Activated naive CD8-positive, alpha-beta T cell treated with anti-CD3 and anti-CD28 coated beads, Interleukin-2, amount 10 ng/mL, durations not matched to agents 7 days and 5 days (primary cell): ENCODE measurements at regions of chr6 and their contacts with region 1.

Region 1: GRCh38 chr6:32971581-32972352 is 3.4 kb downstream of the BRD2 start:
- DNase-seq: peak; percentile 99
- ATAC-seq: peak; percentile 49
- H3K4me3 Mint-ChIP-seq: peak overlapping the region; percentile 89
- H3K27ac Mint-ChIP-seq: peak overlapping the region; percentile 94
- H3K4me1 Mint-ChIP-seq: peaks cover 30% of the 10 kb centered on the region
- H3K27me3 Mint-ChIP-seq: no peaks in the 10 kb centered on the region

Region 2: GRCh38 chr6:32127717-32128592 is 843.8 kb before region 1 on chr6 and contains the start of gene ATF6B:
- POLR2A ChIA-PET with region 1: interaction called, 13 read pairs
- DNase-seq: peak; percentile 87
- ATAC-seq: peak; percentile 95
- H3K4me3 Mint-ChIP-seq: peak within 1 kb of the TSS; percentile 99
- H3K27ac Mint-ChIP-seq: peak within 1 kb of the TSS; percentile 99
- H3K4me1 Mint-ChIP-seq: peaks cover 38% of the 10 kb centered on the region
- H3K27me3 Mint-ChIP-seq: peaks cover 1% of the 10 kb centered on the region
- total RNA-seq, gene ATF6B: 136 to 147 TPM

Region 3: DNA sequence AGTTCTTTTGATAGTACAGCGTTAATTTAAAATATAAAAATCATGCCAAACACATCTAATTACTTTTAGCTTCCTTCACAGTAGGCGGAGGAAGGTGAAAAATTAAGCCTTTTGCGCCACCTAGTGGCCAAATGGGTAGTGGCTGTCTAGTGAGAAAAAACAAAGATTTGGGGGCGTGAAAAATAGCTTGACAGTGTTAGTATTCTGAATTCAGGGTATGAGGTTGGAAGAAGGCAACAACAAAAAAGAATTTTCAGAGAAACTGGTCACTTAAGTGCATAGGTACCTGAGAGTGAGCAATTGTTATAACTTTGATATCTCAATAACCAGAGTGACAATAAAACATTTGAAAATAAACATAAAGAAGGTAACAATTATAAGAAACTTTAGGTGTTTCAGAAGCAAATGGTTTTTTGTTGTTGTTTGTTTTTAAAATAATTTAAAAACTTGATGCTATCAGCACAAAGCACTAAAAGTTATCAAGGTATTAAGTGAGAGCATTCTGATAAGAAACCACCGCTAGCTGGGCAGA is 103.4 kb before region 1 on chr6:
- POLR2A ChIA-PET with region 1: interaction called, 21 read pairs
- DNase-seq: peak; percentile 81
- ATAC-seq: peak; percentile 57
- H3K4me3 Mint-ChIP-seq: no peak overlapping the region
- H3K27ac Mint-ChIP-seq: no peak overlapping the region
- H3K4me1 Mint-ChIP-seq: peaks cover 32% of the 10 kb centered on the region
- H3K27me3 Mint-ChIP-seq: peaks cover 4% of the 10 kb centered on the region

Region 4: DNA sequence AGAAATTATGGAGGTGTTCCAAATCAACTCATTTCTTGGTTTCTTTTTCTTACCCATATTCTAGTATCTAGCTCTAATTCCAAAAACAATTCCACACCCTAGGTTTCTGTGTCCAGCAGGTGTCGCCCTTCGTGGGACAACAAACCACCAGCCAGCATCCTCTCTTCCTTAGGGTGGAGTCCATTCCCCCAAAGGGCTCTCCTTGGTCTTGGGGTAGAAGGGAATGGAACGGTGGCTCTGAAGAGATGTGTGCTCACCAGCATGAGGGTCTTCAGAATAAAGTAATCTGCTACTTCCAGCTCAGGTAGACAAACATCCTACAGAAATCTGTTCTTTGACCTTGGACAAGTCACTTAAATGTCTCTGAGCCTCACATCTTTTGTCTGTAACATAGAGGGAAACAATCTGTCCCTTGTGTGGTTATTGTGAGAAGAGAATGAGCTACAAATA is 38.1 kb before region 1 on chr6:
- POLR2A ChIA-PET with region 1: interaction called, 247 read pairs
- DNase-seq: peak; percentile 72
- ATAC-seq: peak; percentile 54
- H3K4me3 Mint-ChIP-seq: peak overlapping the region; percentile 26
- H3K27ac Mint-ChIP-seq: peak overlapping the region; percentile 44
- H3K4me1 Mint-ChIP-seq: peaks cover 24% of the 10 kb centered on the region
- H3K27me3 Mint-ChIP-seq: peaks cover under 1% of the 10 kb centered on the region

Region 5: GRCh38 chr6:32952817-32953739 is 18.7 kb before region 1 on chr6 and contains the start of gene HLA-DMA:
- POLR2A ChIA-PET with region 1: interaction called, 261 read pairs
- DNase-seq: peak; percentile 65
- ATAC-seq: peak; percentile 93
- H3K4me3 Mint-ChIP-seq: peak within 1 kb of the TSS; percentile 66
- H3K27ac Mint-ChIP-seq: peak within 1 kb of the TSS; percentile 62
- H3K4me1 Mint-ChIP-seq: peaks cover 50% of the 10 kb centered on the region
- H3K27me3 Mint-ChIP-seq: no peaks in the 10 kb centered on the region
- total RNA-seq, gene HLA-DMA: 32.1 to 36.1 TPM

Region 6: GRCh38 chr6:33248925-33249731 is 277.4 kb after region 1 on chr6:
- POLR2A ChIA-PET with region 1: interaction called, 16 read pairs
- DNase-seq: peak; percentile 92
- ATAC-seq: peak; percentile 94
- H3K4me3 Mint-ChIP-seq: peak overlapping the region; percentile 87
- H3K27ac Mint-ChIP-seq: peak overlapping the region; percentile 91
- H3K4me1 Mint-ChIP-seq: peaks cover 26% of the 10 kb centered on the region
- H3K27me3 Mint-ChIP-seq: peaks cover 6% of the 10 kb centered on the region